WTC11 (cell line): ENCODE measurements at regions of chr5 and their contacts with region 1.

Region 1: DNA sequence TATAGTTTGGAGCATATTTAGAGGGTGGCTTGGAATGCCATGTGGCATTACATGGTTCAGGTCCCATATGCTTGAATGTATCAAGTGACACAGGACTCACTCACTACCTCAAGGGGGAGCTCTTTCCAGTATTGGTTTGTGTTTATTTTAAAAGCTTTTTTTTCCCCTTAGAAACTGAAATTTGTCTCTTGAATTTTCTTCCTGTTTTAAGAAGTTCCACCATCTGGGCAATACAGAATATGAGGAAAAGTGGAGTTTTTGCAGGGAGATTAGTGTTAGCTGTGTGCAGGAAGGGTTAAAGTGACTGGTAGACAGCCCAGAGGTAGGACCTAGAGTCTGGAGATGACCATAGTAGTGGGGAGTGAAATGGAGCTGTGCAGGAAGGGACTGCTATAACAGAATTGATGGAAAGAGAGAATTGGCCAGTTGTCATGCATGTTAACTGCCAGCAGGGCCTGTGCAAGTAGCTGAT is 36.6 kb downstream of the CTNNA1 start:
- DNase-seq: peak; percentile 15
- ATAC-seq: peak; percentile 93
- H3K4me3 Mint-ChIP-seq: no peak overlapping the region
- H3K27ac Mint-ChIP-seq: peak overlapping the region; percentile 91
- H3K4me1 Mint-ChIP-seq: peaks cover 25% of the 10 kb centered on the region
- H3K27me3 Mint-ChIP-seq: no peaks in the 10 kb centered on the region
- CTCF ChIP-seq: peak; percentile 37; the same call in 1 of the 2 replicates

Region 2: GRCh38 chr5:138438724-138439476 is 350.9 kb before region 1 on chr5 and contains the start of gene REEP2:
- CTCF ChIA-PET with region 1: no interaction called
- POLR2A ChIA-PET with region 1: no interaction called
- DNase-seq: peak; percentile 74
- ATAC-seq: peak; percentile 72
- H3K4me3 Mint-ChIP-seq: peak within 1 kb of the TSS; percentile 85
- H3K27ac Mint-ChIP-seq: peak within 1 kb of the TSS; percentile 8
- H3K4me1 Mint-ChIP-seq: peaks cover 19% of the 10 kb centered on the region
- H3K27me3 Mint-ChIP-seq: no peaks in the 10 kb centered on the region
- CTCF ChIP-seq: no peak
- total RNA-seq, gene REEP2: 47.7 to 51.1 TPM (median 50.9 TPM) in 3 replicates

Region 3: GRCh38 chr5:138649316-138649720 is 140.5 kb before region 1 on chr5:
- CTCF ChIA-PET with region 1: interaction called, 14 read pairs
- POLR2A ChIA-PET with region 1: interaction called, 3 read pairs
- DNase-seq: no peak
- ATAC-seq: peak; percentile 53
- H3K4me3 Mint-ChIP-seq: no peak overlapping the region
- H3K27ac Mint-ChIP-seq: no peak overlapping the region
- H3K4me1 Mint-ChIP-seq: peaks cover 36% of the 10 kb centered on the region
- H3K27me3 Mint-ChIP-seq: no peaks in the 10 kb centered on the region
- CTCF ChIP-seq: no peak

Region 4: DNA sequence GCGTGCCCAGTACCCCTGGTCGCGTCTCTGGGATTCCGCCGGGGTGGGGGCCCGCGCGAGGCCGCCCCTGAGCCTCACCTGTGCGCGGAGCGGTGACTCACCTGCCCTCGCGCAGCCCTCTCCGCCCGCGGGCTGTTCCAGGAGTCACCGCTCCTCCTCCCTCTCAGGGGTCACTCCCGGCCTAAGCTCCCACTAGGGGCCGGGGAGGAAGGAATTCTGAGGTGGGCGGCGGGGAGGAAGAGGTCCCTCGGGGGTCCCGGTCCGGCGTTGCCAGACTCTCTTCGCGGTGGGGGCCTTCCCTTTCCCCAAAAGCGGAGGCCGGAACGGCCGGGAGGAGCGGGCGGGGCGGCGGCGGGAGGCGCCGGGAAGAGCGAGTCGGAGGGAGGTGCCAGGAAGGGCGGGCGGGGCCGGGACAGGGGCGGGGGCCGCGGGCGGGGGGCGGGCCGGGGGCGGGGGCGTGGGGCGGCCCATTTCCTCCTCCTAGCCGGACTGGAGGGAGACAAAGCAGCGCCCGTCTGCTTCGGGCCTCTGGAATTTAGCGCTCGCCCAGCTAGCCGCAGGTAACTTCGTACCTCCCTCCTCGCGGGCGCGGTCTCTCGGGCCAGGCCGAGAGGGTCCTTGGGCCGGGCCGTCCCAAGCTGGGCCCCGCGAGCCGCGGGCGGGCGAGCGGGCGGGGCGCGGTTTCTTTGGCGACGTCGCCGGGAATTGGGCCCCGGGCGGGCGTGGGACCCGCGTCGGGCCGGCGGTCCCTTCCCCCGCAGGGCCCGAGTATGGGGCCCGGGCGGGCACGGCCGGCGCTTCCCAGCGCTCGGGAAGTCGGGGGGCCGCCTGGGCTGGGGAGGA is 36.6 kb before region 1 on chr5 and contains the start of gene CTNNA1:
- CTCF ChIA-PET with region 1: interaction called, 10 read pairs
- POLR2A ChIA-PET with region 1: interaction called, 5 read pairs
- DNase-seq: peak; percentile 87
- ATAC-seq: peak; percentile 81
- H3K4me3 Mint-ChIP-seq: peak within 1 kb of the TSS; percentile 86
- H3K27ac Mint-ChIP-seq: peak within 1 kb of the TSS; percentile 98
- H3K4me1 Mint-ChIP-seq: peaks cover 35% of the 10 kb centered on the region
- H3K27me3 Mint-ChIP-seq: no peaks in the 10 kb centered on the region
- CTCF ChIP-seq: no peak
- total RNA-seq, gene CTNNA1: 297 to 309 TPM (median 309 TPM) in 3 replicates

Region 5: GRCh38 chr5:138772986-138773594 is 16.7 kb before region 1 on chr5:
- CTCF ChIA-PET with region 1: interaction called, 12 read pairs
- POLR2A ChIA-PET with region 1: interaction called, 10 read pairs
- DNase-seq: no peak
- ATAC-seq: no peak
- H3K4me3 Mint-ChIP-seq: no peak overlapping the region
- H3K27ac Mint-ChIP-seq: peak overlapping the region; percentile 78; the same call in 1 of the 2 replicates
- H3K4me1 Mint-ChIP-seq: peaks cover 35% of the 10 kb centered on the region
- H3K27me3 Mint-ChIP-seq: no peaks in the 10 kb centered on the region
- CTCF ChIP-seq: no peak

Region 6: DNA sequence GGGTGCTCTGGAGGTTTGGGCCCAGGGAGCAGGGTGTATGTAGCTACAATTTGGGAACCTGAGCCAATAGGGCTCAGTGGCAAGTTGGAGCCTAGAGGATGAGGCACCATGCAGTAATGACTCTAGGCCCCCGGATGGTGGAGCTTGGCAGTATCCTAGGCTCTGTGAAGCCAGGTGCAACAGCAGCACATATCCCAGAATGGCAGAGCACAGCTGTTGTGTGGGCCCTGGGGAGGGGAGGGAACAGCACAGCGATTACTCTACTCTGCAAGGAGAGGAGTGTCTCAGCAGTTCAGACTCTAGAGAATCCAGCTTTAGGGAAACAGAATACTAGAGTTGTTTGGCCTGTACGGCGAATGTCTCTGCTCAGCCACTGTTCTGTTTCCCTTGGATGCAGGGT is 29.3 kb after region 1 on chr5:
- CTCF ChIA-PET with region 1: interaction called, 15 read pairs
- POLR2A ChIA-PET with region 1: no interaction called
- DNase-seq: no peak
- ATAC-seq: peak; percentile 78
- H3K4me3 Mint-ChIP-seq: no peak overlapping the region
- H3K27ac Mint-ChIP-seq: peak overlapping the region; percentile 47; the same call in 1 of the 2 replicates
- H3K4me1 Mint-ChIP-seq: peaks cover 27% of the 10 kb centered on the region
- H3K27me3 Mint-ChIP-seq: no peaks in the 10 kb centered on the region
- CTCF ChIP-seq: no peak

Region 7: DNA sequence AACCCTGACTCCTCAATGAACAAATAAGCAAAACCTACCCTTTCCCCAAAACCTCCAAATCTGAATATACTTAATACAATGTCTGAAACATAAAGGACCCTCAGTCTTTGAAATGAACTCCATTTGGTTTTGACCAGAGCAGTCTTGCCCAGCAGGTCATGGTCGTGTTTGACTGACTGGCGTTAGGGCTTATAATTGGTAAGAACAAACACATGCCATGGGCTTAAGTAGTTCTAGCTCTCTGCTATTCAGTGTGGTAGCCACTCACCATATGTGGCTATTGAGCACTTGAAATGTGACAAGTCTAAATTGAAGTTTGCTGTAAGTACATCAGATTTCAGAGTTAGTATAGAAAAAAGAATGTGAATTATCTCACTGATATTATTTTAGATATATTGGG is 43.3 kb after region 1 on chr5:
- CTCF ChIA-PET with region 1: interaction called, 16 read pairs
- POLR2A ChIA-PET with region 1: no interaction called
- DNase-seq: no peak
- ATAC-seq: peak; percentile 63
- H3K4me3 Mint-ChIP-seq: peak overlapping the region; percentile 11
- H3K27ac Mint-ChIP-seq: peak overlapping the region; percentile 95
- H3K4me1 Mint-ChIP-seq: peaks cover 89% of the 10 kb centered on the region
- H3K27me3 Mint-ChIP-seq: no peaks in the 10 kb centered on the region
- CTCF ChIP-seq: no peak

Region 8: DNA sequence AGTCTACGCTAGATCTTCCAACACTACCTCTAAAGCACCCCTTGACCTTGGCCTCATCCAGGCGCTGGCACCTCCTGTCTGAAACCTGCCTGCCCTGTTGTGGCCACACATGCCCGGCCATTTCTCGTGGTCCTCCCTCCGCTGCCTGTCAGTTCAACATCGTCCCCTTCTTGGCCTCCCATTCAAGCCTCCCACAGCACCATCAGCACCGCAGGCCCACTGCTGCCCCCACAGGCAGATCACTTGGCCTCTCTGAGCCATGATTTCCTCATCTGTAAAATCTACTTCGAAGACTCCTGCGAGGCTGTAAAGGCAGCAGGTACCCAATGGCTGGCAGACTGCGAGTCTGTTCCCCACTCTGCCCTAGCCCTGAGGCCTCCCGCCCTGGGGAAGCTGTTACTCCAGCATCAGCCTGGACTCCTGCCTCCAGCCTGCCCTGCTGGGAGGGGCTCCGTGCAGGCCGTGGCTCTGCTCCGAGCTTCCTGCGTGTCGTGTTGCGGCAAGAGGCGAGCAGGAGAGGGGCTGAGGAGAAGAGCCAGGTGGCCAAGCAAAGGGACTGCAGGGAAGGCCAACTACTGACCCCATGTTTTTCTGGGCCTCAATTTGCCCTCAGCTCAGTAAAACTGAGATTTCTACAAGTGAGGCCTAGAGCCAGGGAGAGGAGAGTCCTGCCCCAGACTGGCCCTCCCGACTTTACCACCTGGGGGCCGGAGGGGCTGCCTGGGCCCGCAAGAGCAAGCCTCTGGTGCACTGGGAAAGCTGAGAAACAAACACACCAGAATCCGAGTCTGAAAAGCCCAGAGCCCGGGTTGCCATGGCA is 155.8 kb after region 1 on chr5:
- CTCF ChIA-PET with region 1: interaction called, 12 read pairs
- POLR2A ChIA-PET with region 1: no interaction called
- DNase-seq: peak; percentile 55
- ATAC-seq: peak; percentile 57
- H3K4me3 Mint-ChIP-seq: no peak overlapping the region
- H3K27ac Mint-ChIP-seq: peak overlapping the region; percentile 48
- H3K4me1 Mint-ChIP-seq: peaks cover 38% of the 10 kb centered on the region
- H3K27me3 Mint-ChIP-seq: no peaks in the 10 kb centered on the region
- CTCF ChIP-seq: no peak